ENCODE measurements at regions of chr12 and their contacts with region 1.

Region 1: GRCh38 chr12:43914923-43915468 is 79.1 kb downstream of the TMEM117 start:
- DNase-seq: no peak
- H3K4me3 ChIP-seq: no peak overlapping the region
- H3K27ac ChIP-seq: no peak overlapping the region
- H3K4me1 ChIP-seq: peaks cover 0 to 3% (median 0%) of the 10 kb centered on the region in 4 experiments; a peak in 2 of 7 replicates
- H3K27me3 ChIP-seq: no peaks in the 10 kb centered on the region
- CTCF ChIP-seq: peak in 2 of 3 experiments; percentile 49 to 64; a peak in 3 of 4 replicates
- EP300 ChIP-seq: no peak
- POLR2A ChIP-seq: no peak
- RAD21 ChIP-seq: peak; percentile 61 to 66; a peak in 3 of 4 replicates

Region 2: DNA sequence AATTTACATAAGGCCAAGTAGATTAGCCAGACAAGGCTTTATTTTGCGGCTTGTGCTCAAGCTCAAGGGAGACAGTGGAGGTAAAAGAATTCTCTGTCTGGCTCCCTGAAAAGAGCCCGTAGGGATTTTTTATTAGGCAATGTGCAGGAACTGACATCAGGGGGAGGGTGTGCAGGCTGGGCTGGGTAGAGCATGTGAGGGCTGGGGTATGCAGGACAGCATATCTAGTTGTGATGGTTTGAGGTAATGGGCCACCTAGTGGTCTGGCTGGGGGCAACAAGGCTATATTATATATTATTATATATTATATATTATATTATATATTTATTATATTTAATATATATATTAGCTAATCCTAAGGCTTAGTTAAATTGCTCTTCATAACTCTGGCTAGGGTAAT is 23.0 kb after region 1 on chr12:
- CTCF ChIA-PET with region 1: interaction called, 12 read pairs
- POLR2A ChIA-PET with region 1: no interaction called
- DNase-seq: no peak
- H3K4me3 ChIP-seq: no peak overlapping the region
- H3K27ac ChIP-seq: no peak overlapping the region
- H3K4me1 ChIP-seq: no peaks in the 10 kb centered on the region
- H3K27me3 ChIP-seq: no peaks in the 10 kb centered on the region
- CTCF ChIP-seq: peak; percentile 19 to 39 (median 30)
- EP300 ChIP-seq: no peak
- POLR2A ChIP-seq: no peak
- RAD21 ChIP-seq: peak in 1 of 2 experiments; percentile 32; a peak in 2 of 4 replicates